T-cell (primary cell): ENCODE measurements at regions of chr6 and their contacts with region 1.

Region 1: GRCh38 chr6:89829591-89830385 is at the start of gene CASP8AP2:
- DNase-seq: peak; percentile 83 to 98 (median 94)
- ATAC-seq: peak; percentile 93 to 94 (median 93)
- H3K4me3 ChIP-seq: peak within 1 kb of the TSS; percentile 82 to 93
- H3K4me3 Mint-ChIP-seq: peak within 1 kb of the TSS; percentile 94 to 100 (median 98)
- H3K27ac ChIP-seq: peak within 1 kb of the TSS; percentile 81
- H3K27ac Mint-ChIP-seq: peak within 1 kb of the TSS; percentile 96 to 99
- H3K4me1 ChIP-seq: peaks cover 10 to 31% of the 10 kb centered on the region in 2 experiments
- H3K4me1 Mint-ChIP-seq: peaks cover 35 to 46% (median 39%) of the 10 kb centered on the region in 3 donors
- H3K27me3 ChIP-seq: no peaks in the 10 kb centered on the region
- H3K27me3 Mint-ChIP-seq: no peaks in the 10 kb centered on the region
- total RNA-seq, gene CASP8AP2: 27.8 to 46.8 (median 39.7) TPM

Region 2: DNA sequence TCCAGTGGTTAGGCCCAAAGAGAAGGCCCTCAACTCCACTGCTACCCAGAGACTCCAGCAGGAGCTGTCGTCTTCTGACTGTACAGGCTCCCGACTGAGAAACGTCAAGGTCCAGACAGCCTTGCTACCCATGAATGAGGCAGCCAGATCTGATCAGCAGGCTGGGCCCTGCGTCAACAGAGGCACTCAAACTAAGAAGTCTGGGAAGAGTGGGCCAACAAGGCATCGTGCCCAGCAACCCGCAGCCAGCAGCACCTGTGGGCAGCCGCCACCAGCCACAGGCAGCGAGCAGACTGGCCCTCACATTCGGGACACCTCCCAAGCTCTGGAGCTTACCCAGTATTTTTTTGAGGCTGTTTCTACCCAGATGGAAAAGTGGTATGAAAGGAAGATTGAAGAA is 199.3 kb before region 1 on chr6:
- CTCF ChIA-PET with region 1: no interaction called
- POLR2A ChIA-PET with region 1: no interaction called
- DNase-seq: no peak
- ATAC-seq: no peak
- H3K4me3 ChIP-seq: no peak overlapping the region
- H3K4me3 Mint-ChIP-seq: no peak overlapping the region
- H3K27ac ChIP-seq: no peak overlapping the region
- H3K27ac Mint-ChIP-seq: no peak overlapping the region
- H3K4me1 ChIP-seq: no peaks in the 10 kb centered on the region
- H3K4me1 Mint-ChIP-seq: peaks cover 0 to under 1% (median 0%) of the 10 kb centered on the region in 3 donors
- H3K27me3 ChIP-seq: no peaks in the 10 kb centered on the region
- H3K27me3 Mint-ChIP-seq: no peaks in the 10 kb centered on the region

Region 3: DNA sequence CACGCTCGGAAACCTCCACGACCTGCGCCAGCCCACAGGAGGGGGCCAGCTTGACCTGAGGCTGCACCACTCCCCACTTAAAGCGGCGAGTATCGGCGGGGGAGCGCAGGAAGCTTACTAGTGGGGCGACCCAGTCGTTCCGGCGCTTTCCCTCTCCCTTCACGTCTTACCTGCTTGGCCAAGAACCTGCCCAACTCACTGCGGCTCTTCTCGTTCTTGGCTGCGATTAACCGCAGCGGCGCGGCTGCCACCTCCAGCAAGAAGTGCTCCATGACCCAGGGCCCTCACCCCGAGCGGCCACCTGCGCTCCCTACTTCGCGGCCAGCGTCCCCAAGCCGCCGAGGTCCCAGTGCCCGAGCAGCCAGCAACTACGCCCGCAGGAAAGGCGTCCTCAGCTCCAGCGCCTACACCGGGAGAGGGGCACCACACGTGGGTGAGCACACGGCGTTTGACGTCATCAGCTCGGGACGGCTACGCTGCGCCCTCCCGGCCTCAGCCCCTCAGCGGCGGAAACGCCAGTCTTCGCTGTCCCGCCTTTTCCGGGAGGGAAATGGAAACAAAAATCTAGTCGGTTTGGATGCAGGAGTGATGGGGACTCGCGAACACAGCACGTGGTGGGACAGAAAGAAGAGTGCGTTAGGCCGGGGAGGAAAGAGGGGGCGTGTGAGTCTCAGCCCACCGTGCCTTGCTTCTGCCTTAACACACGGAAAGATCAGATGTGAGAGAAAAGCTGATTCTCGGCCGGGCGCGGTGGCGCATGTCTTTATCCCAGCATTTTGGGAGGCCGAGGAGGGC is 10.3 kb before region 1 on chr6 and contains the start of gene MDN1:
- CTCF ChIA-PET with region 1: interaction called, 5 to 21 read pairs
- POLR2A ChIA-PET with region 1: interaction called, 9 to 24 read pairs
- DNase-seq: peak; percentile 71 to 96 (median 82)
- ATAC-seq: peak; percentile 95 to 97 (median 96)
- H3K4me3 ChIP-seq: peak within 1 kb of the TSS; percentile 86 to 96
- H3K4me3 Mint-ChIP-seq: peak within 1 kb of the TSS; percentile 93 to 96 (median 95)
- H3K27ac ChIP-seq: peak within 1 kb of the TSS; percentile 56
- H3K27ac Mint-ChIP-seq: peak within 1 kb of the TSS; percentile 93 to 97
- H3K4me1 ChIP-seq: peaks cover 10 to 25% of the 10 kb centered on the region in 2 experiments
- H3K4me1 Mint-ChIP-seq: peaks cover 36 to 42% (median 40%) of the 10 kb centered on the region in 3 donors
- H3K27me3 ChIP-seq: no peaks in the 10 kb centered on the region
- H3K27me3 Mint-ChIP-seq: no peaks in the 10 kb centered on the region
- total RNA-seq, gene MDN1: 56.0 to 64.9 (median 60.8) TPM